Brain microvascular endothelial cell (primary cell): ENCODE measurements at regions of chr9 and their contacts with region 1.

Region 1: DNA sequence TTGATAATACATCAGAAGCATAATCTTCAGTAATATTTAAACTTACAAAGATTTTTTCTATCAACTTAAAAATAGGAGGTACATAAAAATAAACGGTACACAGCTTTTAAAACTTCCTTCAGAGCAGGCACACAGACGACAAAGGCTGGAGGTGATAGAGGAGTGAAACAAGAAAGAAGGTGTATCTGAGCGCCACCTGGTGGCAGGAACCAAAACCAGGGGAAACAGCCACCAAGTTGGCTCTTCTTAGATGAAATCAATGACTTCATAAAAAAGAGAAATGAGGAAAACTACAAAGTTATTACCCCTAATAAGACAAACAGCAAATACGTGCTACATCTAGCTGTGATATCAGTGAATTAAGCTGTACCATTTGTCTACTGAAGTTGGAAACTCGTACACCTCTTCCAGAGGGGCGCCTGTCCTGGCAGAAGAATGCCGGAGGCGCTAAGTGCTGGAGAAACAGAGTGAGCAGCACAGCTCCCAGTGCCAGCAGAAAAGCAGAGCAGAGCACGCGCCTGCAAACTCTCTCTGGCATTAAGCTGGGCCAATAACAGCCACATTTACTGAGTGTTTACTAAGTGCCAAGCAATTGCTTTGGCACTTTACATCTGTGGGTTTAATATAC is 85.9 kb downstream of the SETX start:
- DNase-seq: peak; percentile 67
- H3K4me3 ChIP-seq: no peak overlapping the region
- H3K27ac ChIP-seq: no peak overlapping the region
- H3K27me3 ChIP-seq: no peaks in the 10 kb centered on the region
- CTCF ChIP-seq: peak; percentile 92

Region 2: GRCh38 chr9:131773911-131774379 is 494.9 kb before region 1 on chr9:
- in situ Hi-C with region 1: no loop called
- DNase-seq: peak; percentile 46
- H3K4me3 ChIP-seq: no peak overlapping the region
- H3K27ac ChIP-seq: no peak overlapping the region
- H3K27me3 ChIP-seq: peaks cover 4% of the 10 kb centered on the region
- CTCF ChIP-seq: no peak

Region 3: DNA sequence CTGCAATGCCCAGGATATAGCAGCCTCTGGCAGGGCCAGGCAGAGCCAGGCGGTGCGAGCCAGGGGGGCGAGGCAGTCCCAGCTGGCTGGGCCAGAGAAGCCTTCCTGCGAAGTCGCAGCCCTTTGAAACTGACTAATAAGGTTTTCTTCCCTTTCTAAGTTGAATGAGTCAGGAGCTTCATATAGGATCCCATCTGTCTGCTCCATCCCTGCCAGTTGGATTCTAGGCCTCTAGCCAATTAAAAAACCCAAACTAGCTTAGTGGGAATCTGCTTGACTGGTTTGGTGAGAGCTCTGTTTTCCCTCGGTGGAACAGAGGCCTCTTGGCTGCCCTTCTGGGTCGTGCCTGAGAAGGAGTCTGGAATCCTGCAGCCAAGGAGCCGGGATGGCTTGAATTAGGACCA is 458.9 kb before region 1 on chr9:
- in situ Hi-C with region 1: loop called (anchors 25 kb)
- DNase-seq: no peak
- H3K4me3 ChIP-seq: no peak overlapping the region
- H3K27ac ChIP-seq: no peak overlapping the region
- H3K27me3 ChIP-seq: peaks cover 29% of the 10 kb centered on the region
- CTCF ChIP-seq: no peak

Region 4: DNA sequence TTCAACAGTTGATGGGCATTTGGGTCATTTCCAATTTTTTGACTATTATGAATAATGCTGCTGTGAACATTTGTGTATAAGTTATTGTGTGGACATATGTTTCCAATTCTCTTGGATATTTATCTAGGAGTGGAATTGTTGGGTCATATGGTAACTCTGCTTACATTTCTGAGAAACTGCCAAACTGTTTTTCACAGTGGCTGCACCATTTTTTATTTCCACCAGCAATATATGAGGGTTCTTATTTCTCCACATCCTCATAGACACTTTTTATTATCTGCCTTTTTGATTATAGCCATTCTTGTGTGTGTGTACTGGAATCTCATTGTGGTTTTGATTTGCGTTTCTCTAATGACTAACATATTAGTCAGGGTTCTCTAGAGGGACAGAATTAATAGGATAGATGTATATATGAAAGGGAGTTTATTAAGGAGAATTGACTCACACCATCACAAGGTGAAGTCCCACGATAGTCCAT is 174.5 kb before region 1 on chr9:
- in situ Hi-C with region 1: no loop called
- DNase-seq: peak; percentile 58
- H3K4me3 ChIP-seq: no peak overlapping the region
- H3K27ac ChIP-seq: peak overlapping the region; percentile 67
- H3K27me3 ChIP-seq: peaks cover 3% of the 10 kb centered on the region
- CTCF ChIP-seq: no peak

Region 5: GRCh38 chr9:132169672-132170392 is 99.0 kb before region 1 on chr9:
- in situ Hi-C with region 1: no loop called
- DNase-seq: no peak
- H3K4me3 ChIP-seq: no peak overlapping the region
- H3K27ac ChIP-seq: no peak overlapping the region
- H3K27me3 ChIP-seq: peaks cover 28% of the 10 kb centered on the region
- CTCF ChIP-seq: peak; percentile 89

Region 6: DNA sequence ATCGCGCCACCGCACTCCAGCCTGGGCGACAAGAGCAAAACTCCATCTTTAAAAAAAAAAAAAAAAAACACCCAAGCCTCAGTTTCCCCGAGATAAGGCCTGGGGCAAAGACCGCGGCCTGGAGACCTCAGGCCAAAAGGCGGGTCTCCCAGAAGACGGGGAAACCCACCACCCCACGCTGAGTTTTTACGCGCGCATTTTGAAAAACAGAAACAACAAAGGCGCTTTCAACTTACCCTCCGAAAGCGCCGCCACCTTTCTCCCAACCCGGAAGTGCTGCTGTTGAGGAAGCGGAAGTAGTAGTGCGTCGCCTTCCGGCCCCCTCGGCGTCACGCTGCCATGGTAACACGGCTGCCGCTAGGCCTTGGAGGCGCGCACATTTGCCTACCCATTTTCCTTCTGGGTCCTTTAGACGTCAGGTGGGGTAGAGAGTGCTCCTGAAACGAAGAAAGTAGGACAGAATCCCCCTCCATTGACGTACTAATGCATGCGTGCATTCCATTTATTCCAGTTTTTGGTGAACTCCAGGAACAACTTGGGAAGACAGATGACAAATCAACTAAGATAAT is 137.8 kb after region 1 on chr9 and contains the start of gene TTF1:
- in situ Hi-C with region 1: no loop called
- DNase-seq: peak; percentile 80
- H3K4me3 ChIP-seq: peak within 1 kb of the TSS; percentile 79
- H3K27ac ChIP-seq: peak within 1 kb of the TSS; percentile 55
- H3K27me3 ChIP-seq: no peaks in the 10 kb centered on the region
- CTCF ChIP-seq: no peak